ENCODE measurements at regions of chr9 and their contacts with region 1.

Region 1: GRCh38 chr9:136790927-136791641 is at the start of gene TMEM141:
- DNase-seq: peak; percentile 99 to 100
- H3K4me3 ChIP-seq: peak within 1 kb of the TSS; percentile 73
- H3K27ac ChIP-seq: peak within 1 kb of the TSS; percentile 86 to 88
- H3K4me1 ChIP-seq: peaks cover 0 to 14% of the 10 kb centered on the region in 2 donors
- H3K27me3 ChIP-seq: no peaks in the 10 kb centered on the region
- CTCF ChIP-seq: no peak
- total RNA-seq, gene TMEM141: 10.9 TPM

Region 2: DNA sequence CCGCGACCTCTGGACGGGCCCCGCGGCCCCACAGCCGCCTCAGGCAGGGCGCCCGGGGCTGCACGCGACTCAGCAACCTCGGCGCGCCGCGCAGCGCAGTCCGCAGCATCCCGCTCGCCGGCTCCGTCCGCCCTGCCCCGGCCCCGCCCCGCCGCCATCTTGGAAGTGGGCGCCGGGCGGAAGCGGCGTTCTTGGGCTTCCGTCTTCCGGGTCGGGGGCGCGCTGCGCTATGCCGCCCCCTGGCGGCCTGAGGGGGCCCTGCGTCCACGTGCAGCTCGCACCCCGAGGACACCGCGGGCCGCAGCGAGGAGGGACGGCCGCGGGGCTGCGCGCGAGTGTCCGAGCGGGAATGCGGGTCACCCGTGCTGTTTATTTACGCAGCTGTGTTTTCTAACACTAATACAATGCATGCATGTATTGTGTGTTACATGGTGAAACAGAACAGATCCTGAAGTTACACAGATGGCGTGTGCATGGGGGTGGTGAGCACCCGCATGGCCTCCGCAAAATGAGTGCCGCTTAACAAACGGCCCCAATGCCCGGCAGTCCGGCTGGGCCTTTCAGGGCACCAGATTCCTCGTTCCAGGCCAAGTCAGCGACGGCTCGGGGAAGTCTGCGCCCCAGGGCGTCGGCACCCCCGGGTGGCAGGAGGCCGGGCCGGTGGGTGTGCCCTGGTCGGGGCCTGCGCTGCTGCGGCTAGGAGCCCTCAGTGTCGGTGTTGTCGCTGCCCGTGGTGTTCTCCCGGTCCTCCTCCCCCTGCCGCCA is 427.3 kb before region 1 on chr9 and contains the start of gene DNLZ:
- intact Hi-C with region 1: no loop called
- DNase-seq: peak in 1 of 2 donors; percentile 92
- H3K4me3 ChIP-seq: peak within 1 kb of the TSS; percentile 86 to 97
- H3K27ac ChIP-seq: peak within 1 kb of the TSS; percentile 85 to 90
- H3K4me1 ChIP-seq: peaks cover 5 to 8% of the 10 kb centered on the region in 2 donors
- H3K27me3 ChIP-seq: no peaks in the 10 kb centered on the region
- CTCF ChIP-seq: peak; percentile 94 to 99 (median 97)
- total RNA-seq, gene DNLZ: 191 TPM

Region 3: DNA sequence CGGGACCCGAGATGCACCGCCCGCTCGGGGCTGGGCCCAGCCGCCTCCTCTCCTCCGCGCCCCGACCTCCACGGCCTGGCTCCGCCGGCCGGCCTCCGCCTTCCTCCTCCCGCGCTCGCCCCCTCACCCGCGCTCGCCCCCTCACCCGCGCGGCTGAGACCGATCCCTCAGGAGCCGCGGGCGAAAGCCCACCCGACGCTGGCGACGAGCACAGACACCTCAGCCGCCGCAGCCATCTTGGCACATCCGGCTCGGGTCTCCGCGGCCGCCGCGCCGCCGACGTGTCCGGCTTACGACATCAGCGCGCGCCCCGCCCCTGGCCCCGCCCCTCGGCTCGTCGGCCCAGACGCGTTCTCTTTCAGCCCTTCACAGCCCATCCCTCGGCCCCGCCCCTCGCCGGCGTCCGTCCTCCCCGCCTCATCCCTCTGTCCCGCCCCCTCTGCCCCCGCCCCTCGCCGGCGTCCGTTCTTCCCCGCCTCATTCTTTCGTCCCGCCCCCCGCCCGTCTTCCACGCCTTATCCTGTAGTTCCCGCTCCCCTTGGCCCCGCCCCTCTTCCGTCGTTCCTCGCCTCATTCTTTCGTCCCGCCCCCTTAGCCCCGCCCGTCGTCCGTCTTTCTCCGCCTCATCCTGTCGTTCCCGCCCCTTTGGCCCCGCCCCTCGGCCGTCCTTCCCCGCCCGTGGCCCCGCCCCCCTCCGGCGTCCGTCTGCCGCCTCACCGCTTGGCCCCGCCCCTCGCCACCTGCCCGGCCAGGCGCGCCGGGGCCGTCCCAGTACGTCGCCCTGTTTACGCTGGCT is 308.1 kb before region 1 on chr9 and contains the start of gene SEC16A:
- intact Hi-C with region 1: loop called (anchors 1 kb)
- DNase-seq: peak; percentile 93 to 99
- H3K4me3 ChIP-seq: peak within 1 kb of the TSS; percentile 71 to 82
- H3K27ac ChIP-seq: peak within 1 kb of the TSS; percentile 98 to 100
- H3K4me1 ChIP-seq: peaks cover 15 to 16% of the 10 kb centered on the region in 2 donors
- H3K27me3 ChIP-seq: no peaks in the 10 kb centered on the region
- CTCF ChIP-seq: no peak
- total RNA-seq, gene SEC16A: 66.1 TPM

Region 4: DNA sequence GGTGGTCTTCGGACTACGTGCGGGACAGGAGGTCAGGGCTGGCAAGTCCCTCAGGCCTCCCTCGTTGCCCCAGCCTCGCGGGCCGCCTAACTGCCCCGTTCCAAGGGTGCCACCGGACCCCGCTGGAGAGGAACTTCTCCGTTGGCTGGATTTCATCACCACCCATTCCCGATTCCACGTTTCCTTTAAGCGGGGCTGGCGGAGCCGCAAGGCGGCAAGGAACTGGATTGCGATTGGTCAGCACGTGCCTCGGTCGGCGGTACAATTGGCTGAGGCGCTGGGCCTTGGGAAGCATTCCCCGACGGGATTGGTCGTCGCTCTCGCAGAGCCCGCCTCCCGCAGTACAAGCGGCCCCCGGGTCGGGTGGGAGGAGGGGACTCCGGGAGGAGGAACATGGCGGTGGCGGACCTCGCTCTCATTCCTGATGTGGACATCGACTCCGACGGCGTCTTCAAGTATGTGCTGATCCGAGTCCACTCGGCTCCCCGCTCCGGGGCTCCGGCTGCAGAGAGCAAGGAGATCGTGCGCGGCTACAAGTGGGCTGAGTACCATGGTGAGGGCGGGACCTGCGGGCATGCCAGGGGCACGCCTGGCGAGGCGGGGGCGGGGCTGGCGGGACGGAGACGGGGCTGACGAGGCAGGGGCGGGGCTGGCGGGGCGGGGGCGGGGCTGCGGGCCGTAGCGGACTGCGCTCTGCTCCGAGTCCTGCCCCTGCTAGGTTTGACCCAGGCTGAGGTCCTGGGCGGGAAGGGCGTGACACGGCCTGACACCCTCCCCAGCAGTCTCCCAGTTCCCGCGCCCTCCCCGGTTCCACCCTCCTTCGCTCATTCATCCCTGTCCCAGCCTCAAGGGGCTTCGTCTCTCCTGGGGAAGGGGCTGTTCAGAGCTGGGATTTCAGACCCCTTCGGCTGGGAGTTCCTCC is 58.2 kb after region 1 on chr9 and contains the start of gene PHPT1:
- intact Hi-C with region 1: loop called (anchors 1 kb)
- DNase-seq: peak; percentile 94 to 99
- H3K4me3 ChIP-seq: peak within 1 kb of the TSS; percentile 85 to 98
- H3K27ac ChIP-seq: peak within 1 kb of the TSS; percentile 93 to 95
- H3K4me1 ChIP-seq: peaks cover 8 to 21% of the 10 kb centered on the region in 2 donors
- H3K27me3 ChIP-seq: peaks cover 23% of the 10 kb centered on the region
- CTCF ChIP-seq: no peak
- total RNA-seq, gene PHPT1: 108 TPM

Region 5: GRCh38 chr9:136949817-136950655 is 159.0 kb after region 1 on chr9:
- intact Hi-C with region 1: loop called (anchors 2 kb)
- DNase-seq: peak; percentile 88 to 96
- H3K4me3 ChIP-seq: peak overlapping the region; percentile 62 to 83
- H3K27ac ChIP-seq: peak overlapping the region; percentile 81 to 88
- H3K4me1 ChIP-seq: peaks cover 0 to 12% of the 10 kb centered on the region in 2 donors
- H3K27me3 ChIP-seq: no peaks in the 10 kb centered on the region
- CTCF ChIP-seq: peak in 2 of 3 experiments; percentile 10 to 25

Region 6: DNA sequence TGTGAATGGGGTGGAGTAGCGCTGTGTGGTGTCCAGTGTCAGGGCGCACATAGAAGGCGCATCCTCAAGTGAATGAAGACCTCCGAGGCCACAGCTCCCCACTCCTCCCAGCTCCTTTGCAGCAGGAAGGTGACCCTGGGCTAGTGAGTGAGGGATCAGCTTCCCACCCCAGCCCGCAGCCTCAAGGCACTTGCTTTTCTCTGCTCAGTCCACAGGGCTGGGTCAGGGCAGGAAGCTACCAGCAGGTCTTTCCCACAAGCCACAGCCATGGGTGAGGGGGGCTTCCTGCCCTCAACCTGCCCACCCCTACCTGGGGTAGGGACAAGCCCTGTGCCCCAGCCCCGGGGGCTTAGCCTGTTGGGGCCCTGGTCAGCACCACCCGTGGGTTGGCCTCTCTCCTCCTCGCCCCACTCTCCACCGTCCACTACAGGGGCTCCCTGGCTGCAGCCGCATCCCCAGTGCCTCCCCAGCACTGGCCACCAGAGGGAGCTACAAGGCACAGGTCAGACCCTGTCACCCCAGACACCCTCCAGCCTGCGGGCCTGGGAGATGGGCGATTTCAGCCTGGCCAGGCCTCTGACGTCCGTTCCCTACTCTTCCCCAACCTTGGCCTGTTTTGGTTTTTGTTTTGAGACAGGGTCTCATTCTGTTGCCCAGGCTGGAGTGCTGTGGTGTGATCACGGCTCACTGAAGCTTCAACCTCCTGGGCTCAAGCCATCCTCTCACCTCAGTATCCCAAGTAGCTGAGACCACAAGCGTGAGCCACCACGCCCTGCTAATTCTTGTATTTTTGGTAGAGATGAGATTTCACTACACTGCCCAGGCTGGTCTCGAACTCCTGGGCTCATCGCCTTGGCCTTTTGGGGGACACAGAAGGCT is 238.2 kb after region 1 on chr9:
- intact Hi-C with region 1: loop called (anchors 2 kb)
- DNase-seq: peak in 1 of 2 donors; percentile 87
- H3K4me3 ChIP-seq: peak overlapping the region; percentile 71 to 94
- H3K27ac ChIP-seq: no peak overlapping the region
- H3K4me1 ChIP-seq: peaks cover 17% of the 10 kb centered on the region in 2 donors
- H3K27me3 ChIP-seq: no peaks in the 10 kb centered on the region
- CTCF ChIP-seq: peak; percentile 68 to 88 (median 86)

Region 7: DNA sequence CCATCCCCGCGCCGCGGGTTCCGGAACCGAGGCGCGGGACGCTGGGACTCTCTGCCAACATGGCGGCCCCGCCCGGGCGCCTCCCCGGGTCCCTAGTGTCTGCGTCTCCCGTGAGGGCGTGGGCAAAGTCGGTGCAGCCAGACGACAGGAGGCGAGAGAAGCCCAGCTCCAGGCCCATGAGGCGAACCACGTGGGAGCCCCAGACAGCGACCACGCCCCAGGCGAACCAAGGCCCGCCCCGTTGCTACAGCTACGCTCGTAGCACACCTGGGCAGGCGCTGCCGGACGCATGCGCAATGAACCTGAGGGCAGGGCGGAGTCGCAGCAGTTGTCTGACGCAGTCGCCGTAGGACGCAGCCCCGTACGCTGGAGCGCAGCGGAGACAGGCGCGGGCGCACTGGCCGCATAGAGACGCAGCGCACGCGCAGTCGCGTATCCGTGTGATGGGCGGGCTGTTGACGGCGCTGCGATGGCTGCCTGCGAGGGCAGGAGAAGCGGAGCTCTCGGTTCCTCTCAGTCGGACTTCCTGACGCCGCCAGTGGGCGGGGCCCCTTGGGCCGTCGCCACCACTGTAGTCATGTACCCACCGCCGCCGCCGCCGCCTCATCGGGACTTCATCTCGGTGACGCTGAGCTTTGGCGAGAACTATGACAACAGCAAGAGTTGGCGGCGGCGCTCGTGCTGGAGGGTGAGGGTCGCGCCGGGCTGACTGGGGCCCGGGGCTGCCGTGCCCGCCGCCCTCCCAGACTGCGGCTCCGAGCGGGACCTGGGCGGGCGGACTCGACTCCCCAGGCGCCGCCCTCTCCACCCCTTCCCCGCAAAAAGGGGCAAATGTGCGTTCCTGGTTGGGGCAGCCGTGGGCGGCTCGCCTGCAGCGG is 295.7 kb after region 1 on chr9 and contains the start of gene MAN1B1:
- intact Hi-C with region 1: loop called (anchors 2 kb)
- DNase-seq: peak; percentile 94 to 98
- H3K4me3 ChIP-seq: peak within 1 kb of the TSS; percentile 74 to 99
- H3K27ac ChIP-seq: peak within 1 kb of the TSS; percentile 91 to 96
- H3K4me1 ChIP-seq: peaks cover 12 to 17% of the 10 kb centered on the region in 2 donors
- H3K27me3 ChIP-seq: no peaks in the 10 kb centered on the region
- CTCF ChIP-seq: no peak
- total RNA-seq, gene MAN1B1: 85.3 TPM

Region 8: DNA sequence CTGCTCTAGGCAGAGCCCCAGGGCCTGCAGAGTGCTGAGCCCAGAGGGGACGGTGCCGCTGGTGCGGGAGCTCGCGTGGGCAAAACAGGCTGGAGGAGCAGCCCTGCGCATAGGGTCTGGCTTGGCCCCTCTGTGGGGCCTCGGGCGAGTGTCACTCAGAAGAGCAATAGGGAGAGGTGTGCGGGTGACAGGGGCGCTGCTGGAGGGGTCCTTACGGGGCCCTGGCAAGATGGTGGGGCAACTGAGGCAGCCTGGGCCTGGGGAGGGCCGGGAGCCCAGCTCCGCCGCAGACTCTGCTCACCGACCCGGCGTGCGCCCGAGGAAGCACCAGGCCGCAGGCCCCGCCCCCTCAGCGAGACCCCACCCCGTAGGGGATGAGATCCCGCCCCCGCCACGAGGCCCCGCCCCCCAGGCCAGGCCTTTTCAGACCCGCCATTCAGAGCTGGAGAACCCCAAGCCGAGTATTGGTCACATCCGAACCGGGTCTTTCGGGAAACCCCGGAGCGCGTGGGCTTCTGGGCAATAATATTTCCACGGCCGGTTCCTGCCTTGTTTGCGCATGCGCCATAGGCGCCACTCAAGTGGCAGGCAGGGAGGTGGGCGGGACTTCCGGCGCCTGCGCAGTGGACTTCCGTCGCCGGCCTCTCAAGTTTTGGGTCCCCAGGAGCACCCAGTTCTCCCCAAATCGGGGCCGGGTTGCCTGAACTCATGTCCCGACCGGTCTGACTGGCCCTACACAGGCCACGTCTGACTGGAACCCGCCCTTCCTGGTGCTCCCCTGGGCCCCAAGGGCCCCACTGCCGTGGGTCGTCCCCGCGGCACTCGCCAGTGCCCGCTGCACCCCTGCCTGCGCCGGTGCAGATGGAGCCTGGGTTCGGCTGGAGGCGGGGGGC is 432.2 kb after region 1 on chr9:
- intact Hi-C with region 1: loop called (anchors 10 kb)
- DNase-seq: peak; percentile 94 to 99
- H3K4me3 ChIP-seq: peak overlapping the region; percentile 75 to 89
- H3K27ac ChIP-seq: peak overlapping the region; percentile 94 to 95
- H3K4me1 ChIP-seq: peaks cover 5 to 19% of the 10 kb centered on the region in 2 donors
- H3K27me3 ChIP-seq: no peaks in the 10 kb centered on the region
- CTCF ChIP-seq: no peak

Measured in ascending aorta (tissue), 2 donors.